IMR-90 (cell line): ENCODE measurements at regions of chr4 and their contacts with region 1.

Region 1: DNA sequence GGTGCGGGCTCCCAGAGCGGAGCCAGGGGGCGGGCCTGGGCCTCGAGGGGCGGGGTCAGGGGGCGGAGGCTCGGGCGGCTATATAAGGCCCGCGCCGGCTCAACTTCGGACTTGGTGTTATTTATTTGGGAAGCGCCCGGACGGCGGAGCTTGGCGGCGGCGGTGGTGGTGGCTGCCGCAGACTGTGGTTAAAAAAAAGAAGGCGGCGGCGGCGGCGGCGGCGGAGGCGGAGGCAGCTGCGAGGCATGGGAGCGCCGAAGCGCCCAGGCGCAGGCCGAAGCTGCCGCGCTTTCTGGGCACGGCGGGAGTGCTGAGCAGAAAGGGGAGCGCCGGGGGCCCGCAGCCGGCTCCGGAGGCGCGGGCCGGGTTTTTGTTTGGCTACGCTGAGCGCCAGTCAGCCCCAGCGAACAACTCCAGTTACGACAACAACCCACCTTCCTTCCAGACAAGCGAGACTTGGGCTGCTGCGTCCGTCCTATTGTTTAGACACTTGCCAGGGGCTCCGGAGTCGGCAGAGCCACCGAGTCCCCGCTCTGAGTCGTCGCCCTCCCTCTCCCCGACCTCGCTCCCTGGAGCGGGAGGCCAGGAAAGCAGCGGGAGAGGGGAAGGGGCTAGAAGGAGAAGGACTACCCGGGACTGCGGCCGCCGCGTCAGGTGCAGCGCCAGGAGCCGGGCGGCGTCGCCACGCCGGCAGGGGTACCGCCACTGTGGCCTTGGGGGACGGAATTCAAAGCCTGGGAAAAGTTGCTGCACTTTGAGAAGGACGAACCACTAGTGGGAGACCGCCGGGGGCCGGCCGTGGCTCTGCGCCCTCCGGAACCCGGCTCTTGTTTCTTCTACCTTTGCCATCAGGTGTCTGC is at the start of gene SLIT2:
- DNase-seq: peak; percentile 68
- ATAC-seq: peak; percentile 75
- H3K4me3 ChIP-seq: peak within 1 kb of the TSS; percentile 55
- H3K27ac ChIP-seq: no peak within 1 kb of the TSS; the same call in 1 of the 2 replicates
- H3K4me1 ChIP-seq: peaks cover 11% of the 10 kb centered on the region
- H3K27me3 ChIP-seq: peaks cover 22% of the 10 kb centered on the region
- CTCF ChIP-seq: no peak
- POLR2A ChIP-seq: peak; percentile 93
- RAD21 ChIP-seq: no peak
- total RNA-seq, gene SLIT2: 13.6 and 18.1 TPM in 2 replicates

Region 2: GRCh38 chr4:19005211-19005610 is 1246.8 kb before region 1 on chr4:
- CTCF ChIA-PET with region 1: no interaction called
- POLR2A ChIA-PET with region 1: no interaction called
- dilution Hi-C with region 1: no loop called
- in situ Hi-C with region 1: no loop called
- intact Hi-C with region 1: loop called (anchors 10 kb)
- DNase-seq: peak; percentile 41
- ATAC-seq: peak; percentile 95
- H3K4me3 ChIP-seq: no peak overlapping the region
- H3K27ac ChIP-seq: peak overlapping the region; percentile 58; the same call in 1 of the 2 replicates
- H3K4me1 ChIP-seq: peaks cover 2% of the 10 kb centered on the region
- H3K27me3 ChIP-seq: no peaks in the 10 kb centered on the region
- CTCF ChIP-seq: no peak
- POLR2A ChIP-seq: no peak
- RAD21 ChIP-seq: no peak

Region 3: DNA sequence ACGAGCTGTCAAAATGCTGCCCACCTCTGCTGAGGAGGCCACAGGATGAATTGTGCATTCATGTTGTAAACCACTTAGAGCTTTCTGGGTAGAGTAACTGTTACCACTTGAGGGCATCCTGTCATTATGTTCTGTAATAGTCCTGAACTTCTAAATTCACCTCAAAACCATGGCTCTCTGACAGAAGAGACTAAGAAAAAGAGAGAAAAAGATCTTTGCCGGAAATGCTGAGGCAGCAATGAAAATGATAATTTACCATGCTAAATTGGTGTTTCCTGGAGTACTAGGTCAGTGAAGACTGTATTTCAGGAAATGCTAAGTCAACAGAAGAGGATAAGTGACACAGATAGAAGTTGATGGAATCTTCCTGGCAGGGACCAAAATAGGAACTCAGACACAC is 942.6 kb before region 1 on chr4:
- CTCF ChIA-PET with region 1: interaction called, 3 read pairs
- POLR2A ChIA-PET with region 1: no interaction called
- dilution Hi-C with region 1: no loop called
- in situ Hi-C with region 1: loop called (anchors 10 kb)
- intact Hi-C with region 1: loop called (anchors 1 kb)
- DNase-seq: peak; percentile 74
- ATAC-seq: peak; percentile 87
- H3K4me3 ChIP-seq: no peak overlapping the region
- H3K27ac ChIP-seq: no peak overlapping the region
- H3K4me1 ChIP-seq: peaks cover 2% of the 10 kb centered on the region; the same call in 1 of the 2 replicates
- H3K27me3 ChIP-seq: no peaks in the 10 kb centered on the region
- CTCF ChIP-seq: peak; percentile 66
- POLR2A ChIP-seq: no peak
- RAD21 ChIP-seq: peak; percentile 76

Region 4: GRCh38 chr4:19711871-19712270 is 540.2 kb before region 1 on chr4:
- CTCF ChIA-PET with region 1: no interaction called
- POLR2A ChIA-PET with region 1: no interaction called
- dilution Hi-C with region 1: no loop called
- in situ Hi-C with region 1: no loop called
- intact Hi-C with region 1: loop called (anchors 10 kb)
- DNase-seq: peak; percentile 87
- ATAC-seq: peak; percentile 97
- H3K4me3 ChIP-seq: no peak overlapping the region
- H3K27ac ChIP-seq: no peak overlapping the region
- H3K4me1 ChIP-seq: peaks cover 2% of the 10 kb centered on the region; the same call in 1 of the 2 replicates
- H3K27me3 ChIP-seq: no peaks in the 10 kb centered on the region
- CTCF ChIP-seq: no peak
- POLR2A ChIP-seq: no peak
- RAD21 ChIP-seq: no peak

Region 5: GRCh38 chr4:20313237-20314030 is 61.4 kb after region 1 on chr4:
- CTCF ChIA-PET with region 1: no interaction called
- POLR2A ChIA-PET with region 1: no interaction called
- dilution Hi-C with region 1: no loop called
- in situ Hi-C with region 1: no loop called
- intact Hi-C with region 1: no loop called
- DNase-seq: no peak
- ATAC-seq: no peak
- H3K4me3 ChIP-seq: no peak overlapping the region
- H3K27ac ChIP-seq: no peak overlapping the region
- H3K4me1 ChIP-seq: no peaks in the 10 kb centered on the region
- H3K27me3 ChIP-seq: no peaks in the 10 kb centered on the region
- CTCF ChIP-seq: no peak
- POLR2A ChIP-seq: no peak
- RAD21 ChIP-seq: no peak

Region 6: GRCh38 chr4:20422398-20422797 is 170.4 kb after region 1 on chr4:
- CTCF ChIA-PET with region 1: no interaction called
- POLR2A ChIA-PET with region 1: no interaction called
- dilution Hi-C with region 1: no loop called
- in situ Hi-C with region 1: no loop called
- intact Hi-C with region 1: loop called (anchors 5 kb)
- DNase-seq: peak; percentile 52
- ATAC-seq: peak; percentile 72
- H3K4me3 ChIP-seq: no peak overlapping the region
- H3K27ac ChIP-seq: no peak overlapping the region
- H3K4me1 ChIP-seq: no peaks in the 10 kb centered on the region
- H3K27me3 ChIP-seq: no peaks in the 10 kb centered on the region
- CTCF ChIP-seq: peak; percentile 62
- POLR2A ChIP-seq: no peak
- RAD21 ChIP-seq: peak; percentile 61